A549 (cell line): ENCODE measurements at regions of chr5 and their contacts with region 1.

Region 1: GRCh38 chr5:138241688-138242571 is 28.8 kb upstream of the CDC23 start:
- DNase-seq: no peak
- ATAC-seq: peak; percentile 61 to 86
- H3K4me3 ChIP-seq: peak overlapping the region; percentile 39
- H3K27ac ChIP-seq: peak overlapping the region; percentile 21 to 77; a peak in 4 of 6 replicates
- H3K4me1 ChIP-seq: no peaks in the 10 kb centered on the region
- CTCF ChIP-seq: no peak
- EP300 ChIP-seq: no peak
- POLR2A ChIP-seq: no peak
- RAD21 ChIP-seq: no peak

Region 2: DNA sequence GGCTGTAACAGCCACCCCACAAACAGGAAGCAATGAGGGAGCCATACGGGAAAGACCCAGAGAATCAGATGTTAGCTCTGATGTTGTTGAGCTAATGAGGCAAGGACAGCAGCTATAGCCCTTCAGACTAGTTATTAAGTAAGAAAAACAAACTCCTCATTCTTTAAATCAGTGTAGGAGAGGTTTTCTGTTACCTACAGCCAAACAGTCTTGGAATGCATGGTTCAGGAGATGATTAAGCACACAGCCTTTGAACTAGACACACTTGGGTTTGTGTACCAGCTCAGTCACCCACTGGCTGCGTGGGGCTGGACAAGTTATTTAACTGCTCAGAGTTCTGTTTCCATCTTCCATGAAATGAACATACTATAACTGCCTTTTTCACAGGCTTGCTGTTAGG is 810.9 kb before region 1 on chr5:
- CTCF ChIA-PET with region 1: no interaction called
- POLR2A ChIA-PET with region 1: interaction called, 12 read pairs
- DNase-seq: no peak
- ATAC-seq: no peak
- H3K4me3 ChIP-seq: no peak overlapping the region
- H3K27ac ChIP-seq: no peak overlapping the region
- H3K4me1 ChIP-seq: no peaks in the 10 kb centered on the region
- CTCF ChIP-seq: no peak
- EP300 ChIP-seq: no peak
- POLR2A ChIP-seq: no peak
- RAD21 ChIP-seq: no peak